Activated CD4-positive, alpha-beta memory T cell treated with anti-CD3 and anti-CD28 coated beads for 36 hours (primary cell): ENCODE measurements at regions of chr9 and their contacts with region 1.

Region 1: DNA sequence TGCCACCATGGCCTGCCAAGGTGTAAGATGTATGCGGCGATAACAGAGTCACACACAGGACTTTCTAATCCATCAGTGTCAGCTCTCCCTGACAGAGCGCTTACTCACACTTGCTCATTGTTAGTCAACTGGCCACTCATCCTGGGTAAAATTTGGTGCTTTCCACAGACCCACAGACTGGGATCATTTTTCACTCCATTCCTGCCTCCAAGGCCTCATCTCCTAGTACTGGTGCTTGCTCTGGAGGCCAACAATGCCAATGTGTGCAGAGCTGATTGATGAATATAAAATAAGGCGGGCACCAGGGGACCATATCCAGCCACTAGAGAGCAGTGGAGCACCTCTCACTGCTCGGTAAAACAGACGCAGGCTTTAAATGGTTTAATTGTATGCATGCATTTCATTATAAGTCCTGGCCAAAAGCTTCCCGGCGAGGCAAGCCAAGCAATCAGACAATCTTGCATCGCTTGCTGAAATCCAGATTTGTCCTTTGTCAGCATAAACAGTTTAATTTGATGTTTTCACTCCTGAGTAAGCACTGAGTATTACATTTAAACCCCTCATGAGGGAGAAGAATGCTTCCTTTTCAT is 22.3 kb downstream of the PSMB7 start:
- DNase-seq: peak; percentile 34
- H3K4me3 Mint-ChIP-seq: no peak overlapping the region
- H3K27ac Mint-ChIP-seq: no peak overlapping the region
- H3K4me1 Mint-ChIP-seq: peaks cover 66% of the 10 kb centered on the region
- H3K27me3 Mint-ChIP-seq: no peaks in the 10 kb centered on the region

Region 2: GRCh38 chr9:124366476-124367171 is 26.3 kb before region 1 on chr9:
- CTCF ChIA-PET with region 1: no interaction called
- POLR2A ChIA-PET with region 1: no interaction called
- intact Hi-C with region 1: loop called (anchors 1 kb)
- DNase-seq: no peak
- H3K4me3 Mint-ChIP-seq: no peak overlapping the region
- H3K27ac Mint-ChIP-seq: peak overlapping the region; percentile 4
- H3K4me1 Mint-ChIP-seq: peaks cover 41% of the 10 kb centered on the region
- H3K27me3 Mint-ChIP-seq: no peaks in the 10 kb centered on the region

Region 3: GRCh38 chr9:125074976-125075375 is 682.0 kb after region 1 on chr9:
- CTCF ChIA-PET with region 1: no interaction called
- POLR2A ChIA-PET with region 1: no interaction called
- intact Hi-C with region 1: no loop called
- DNase-seq: no peak
- H3K4me3 Mint-ChIP-seq: no peak overlapping the region
- H3K27ac Mint-ChIP-seq: no peak overlapping the region
- H3K4me1 Mint-ChIP-seq: no peaks in the 10 kb centered on the region
- H3K27me3 Mint-ChIP-seq: no peaks in the 10 kb centered on the region